ENCODE measurements at regions of chr9 and their contacts with region 1.

Region 1: DNA sequence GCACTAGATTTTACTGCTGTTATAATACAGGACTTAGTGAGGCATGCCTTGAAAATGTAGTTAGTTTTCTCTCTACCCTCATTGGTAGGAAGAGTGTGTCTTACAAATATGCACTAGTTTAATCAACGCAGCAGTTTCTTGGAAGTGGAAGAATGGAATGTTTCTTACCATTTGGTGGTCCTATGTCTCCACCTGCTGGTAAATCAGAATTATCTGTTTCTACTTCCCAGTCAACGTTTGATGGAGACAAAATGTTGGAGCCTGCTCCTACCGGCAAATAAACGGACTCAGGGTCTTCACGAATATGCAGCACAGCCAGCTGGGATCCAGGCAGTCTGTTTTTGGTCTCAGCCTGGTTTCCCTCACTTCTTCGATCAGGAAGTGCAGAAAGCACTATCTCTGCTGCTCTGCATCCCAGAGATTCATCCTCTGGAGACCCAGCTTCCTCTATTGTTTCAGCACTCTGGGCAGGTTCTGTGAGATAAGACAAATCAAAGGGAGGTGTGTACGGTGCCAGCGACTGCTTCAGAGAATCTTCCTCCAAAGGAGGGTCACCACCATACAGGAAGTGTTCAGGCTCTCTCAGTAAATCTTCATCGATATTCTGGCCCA is 59.5 kb upstream of the PCA3 start:
- DNase-seq: peak in 1 of 2 donors; percentile 48
- ATAC-seq: peak in 5 of 8 donors; percentile 44 to 78 (median 59)
- H3K4me3 ChIP-seq: no peak overlapping the region
- H3K27ac ChIP-seq: no peak overlapping the region
- H3K4me1 ChIP-seq: peaks cover 0 to 32% (median 0%) of the 10 kb centered on the region in 9 donors
- H3K27me3 ChIP-seq: peaks cover 0 to 56% (median 16%) of the 10 kb centered on the region in 7 donors
- CTCF ChIP-seq: peak; percentile 32 to 83 (median 72)

Region 2: DNA sequence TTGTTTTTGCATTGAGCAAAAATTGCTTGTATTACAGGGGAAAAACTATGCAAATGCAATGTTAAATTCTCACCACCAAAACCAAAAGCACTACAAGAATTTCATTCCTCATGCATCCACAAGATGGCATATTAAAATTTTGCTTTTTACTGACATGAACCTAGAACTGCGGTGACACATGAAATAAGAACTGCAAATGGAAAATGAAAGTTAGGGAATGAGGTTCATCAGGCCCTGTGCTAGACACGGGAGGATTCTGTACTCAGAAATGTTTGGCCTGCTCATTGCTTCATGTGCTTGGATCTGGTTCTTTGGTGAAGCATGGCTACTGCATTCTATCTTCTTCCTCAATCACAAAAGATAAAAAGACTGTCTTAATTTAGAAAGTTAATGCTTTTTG is 301.3 kb before region 1 on chr9:
- intact Hi-C with region 1: loop called in 4 of 10 experiments (anchors 1 to 10 kb)
- DNase-seq: peak in 1 of 2 donors; percentile 13
- ATAC-seq: peak in 7 of 8 donors; percentile 33 to 87 (median 70)
- H3K4me3 ChIP-seq: peak overlapping the region in 4 of 10 donors; percentile 2 to 30 (median 18)
- H3K27ac ChIP-seq: peak overlapping the region in 5 of 10 donors; percentile 6 to 63 (median 41)
- H3K4me1 ChIP-seq: peaks cover 0 to 11% (median 0%) of the 10 kb centered on the region in 9 donors
- H3K27me3 ChIP-seq: no peaks in the 10 kb centered on the region
- CTCF ChIP-seq: peak in 8 of 9 donors; percentile 24 to 69 (median 58)

Region 3: DNA sequence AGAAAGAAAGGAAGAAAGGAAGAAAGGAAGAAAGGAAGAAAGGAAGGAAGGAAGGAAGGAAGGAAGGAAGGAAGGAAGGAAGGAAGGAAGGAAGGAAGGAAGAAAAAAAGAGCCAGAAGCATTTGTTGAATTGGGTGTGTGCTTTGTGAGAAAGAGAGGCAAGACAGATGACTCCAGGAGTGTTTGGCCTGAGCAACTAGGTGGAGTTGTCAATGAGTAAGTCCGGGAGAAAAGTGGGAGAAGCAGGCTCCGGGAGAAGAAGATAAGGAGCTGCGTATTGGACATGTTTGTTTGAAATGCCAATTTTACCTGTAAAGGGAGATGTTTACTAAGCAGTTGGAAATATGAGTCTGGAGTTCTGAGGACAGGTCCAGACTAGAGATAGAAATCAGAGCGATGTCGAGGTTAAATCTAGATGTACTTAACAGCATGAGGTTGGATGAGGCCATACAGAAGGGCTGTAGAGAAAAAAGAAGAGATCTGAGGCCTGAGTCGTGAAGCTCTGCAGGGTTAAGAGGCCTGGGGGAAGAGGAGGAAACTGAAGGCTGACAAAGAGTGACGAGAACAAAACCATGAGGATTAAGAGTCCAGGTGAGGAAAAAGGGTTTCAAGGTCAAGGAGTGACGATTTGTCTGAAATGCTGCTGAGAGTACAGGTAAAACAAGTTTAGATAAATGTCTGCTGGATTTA is 260.7 kb before region 1 on chr9:
- intact Hi-C with region 1: loop called (anchors 1 to 5 kb)
- DNase-seq: no peak
- ATAC-seq: no peak
- H3K4me3 ChIP-seq: no peak overlapping the region
- H3K27ac ChIP-seq: no peak overlapping the region
- H3K4me1 ChIP-seq: peaks cover 0 to 7% (median 0%) of the 10 kb centered on the region in 9 donors
- H3K27me3 ChIP-seq: no peaks in the 10 kb centered on the region
- CTCF ChIP-seq: no peak

Region 4: DNA sequence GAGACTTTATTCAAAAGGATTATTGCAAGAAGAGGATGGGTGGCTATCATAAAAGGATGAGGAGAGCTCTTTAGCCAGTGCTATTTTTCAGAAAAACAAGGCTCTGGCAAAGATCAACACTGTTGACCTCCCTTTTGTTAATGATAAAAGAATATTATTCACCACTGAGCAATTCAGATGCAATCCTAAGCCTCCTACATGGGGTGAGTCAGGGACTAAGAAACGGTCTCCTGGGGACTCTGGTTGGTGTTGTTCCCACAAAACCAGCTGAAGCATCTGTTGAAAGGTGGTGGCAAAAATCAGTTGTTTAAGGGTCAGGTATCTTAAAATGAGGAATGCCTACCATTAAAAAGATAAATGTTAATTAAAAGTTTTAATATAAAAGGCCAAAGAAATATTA is 253.5 kb before region 1 on chr9:
- intact Hi-C with region 1: loop called in 9 of 10 experiments (anchors 1 to 5 kb)
- DNase-seq: no peak
- ATAC-seq: peak in 1 of 8 donors; percentile 68
- H3K4me3 ChIP-seq: no peak overlapping the region
- H3K27ac ChIP-seq: no peak overlapping the region
- H3K4me1 ChIP-seq: peaks cover 0 to 8% (median 0%) of the 10 kb centered on the region in 9 donors
- H3K27me3 ChIP-seq: no peaks in the 10 kb centered on the region
- CTCF ChIP-seq: no peak

Region 5: DNA sequence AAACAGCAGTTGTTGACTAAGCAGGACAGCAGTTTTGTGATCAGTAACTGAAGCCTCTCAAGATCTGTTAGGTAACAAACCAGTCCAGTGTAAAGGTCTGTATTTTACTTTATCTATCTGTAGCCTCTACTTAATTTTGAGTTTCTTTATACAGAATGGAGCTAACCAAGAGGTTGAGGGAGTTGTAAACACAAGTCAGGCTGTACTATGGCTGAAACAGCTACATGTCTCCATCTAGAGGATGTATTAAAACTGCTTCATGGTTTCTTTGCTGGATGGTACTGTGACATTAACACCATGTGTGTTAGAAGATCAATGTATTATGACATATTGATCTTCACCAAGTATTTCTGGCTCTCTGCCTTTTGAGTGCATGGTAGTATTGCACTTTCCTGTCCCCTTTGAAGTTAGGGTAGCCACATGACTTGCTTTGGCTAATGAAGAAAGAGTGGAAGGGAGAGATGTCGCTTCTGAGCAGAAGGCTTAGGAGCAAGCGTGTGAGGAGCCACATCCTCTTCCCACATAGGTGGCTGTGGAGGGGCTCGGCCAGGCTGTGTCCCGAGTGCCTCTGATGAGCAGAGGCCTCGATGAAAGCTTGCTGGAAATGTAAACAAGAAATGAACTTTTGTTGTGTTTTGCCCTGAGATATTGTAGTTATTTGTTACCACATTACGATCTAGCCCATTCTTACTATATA is 46.0 kb before region 1 on chr9:
- intact Hi-C with region 1: loop called in 1 of 10 experiments (anchors 5 kb)
- DNase-seq: no peak
- ATAC-seq: peak in 7 of 8 donors; percentile 75 to 93 (median 84)
- H3K4me3 ChIP-seq: no peak overlapping the region
- H3K27ac ChIP-seq: no peak overlapping the region
- H3K4me1 ChIP-seq: peaks cover 0 to 56% (median 14%) of the 10 kb centered on the region in 9 donors
- H3K27me3 ChIP-seq: no peaks in the 10 kb centered on the region
- CTCF ChIP-seq: peak in 8 of 9 donors; percentile 44 to 76 (median 63)

Region 6: DNA sequence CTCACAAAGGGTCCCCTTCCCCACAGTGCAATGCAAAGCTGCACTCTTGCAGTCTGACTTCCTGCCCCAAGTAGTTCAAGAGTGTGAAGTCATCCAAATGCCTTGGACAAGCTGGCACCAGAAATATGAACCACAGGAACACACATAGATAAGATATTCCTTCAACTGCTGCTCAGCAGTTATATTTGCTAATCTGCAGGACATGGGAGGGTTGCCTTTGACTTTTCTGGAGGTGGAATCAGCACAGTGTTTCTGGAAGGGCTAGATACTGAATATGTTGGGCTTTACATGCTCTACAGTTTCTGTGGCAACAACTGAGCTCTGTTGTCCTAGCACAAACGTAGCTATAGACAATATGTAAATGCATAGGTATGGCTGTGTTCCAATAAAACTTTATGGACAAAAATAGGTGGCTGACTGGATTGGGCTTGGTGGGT is 37.2 kb before region 1 on chr9:
- intact Hi-C with region 1: loop called in 5 of 10 experiments (anchors 5 kb)
- DNase-seq: no peak
- ATAC-seq: no peak
- H3K4me3 ChIP-seq: no peak overlapping the region
- H3K27ac ChIP-seq: no peak overlapping the region
- H3K4me1 ChIP-seq: peaks cover 0 to 15% (median 0%) of the 10 kb centered on the region in 9 donors
- H3K27me3 ChIP-seq: no peaks in the 10 kb centered on the region
- CTCF ChIP-seq: no peak

Region 7: GRCh38 chr9:76744336-76744735 is 39.6 kb after region 1 on chr9:
- intact Hi-C with region 1: no loop called
- DNase-seq: no peak
- ATAC-seq: no peak
- H3K4me3 ChIP-seq: no peak overlapping the region
- H3K27ac ChIP-seq: no peak overlapping the region
- H3K4me1 ChIP-seq: no peaks in the 10 kb centered on the region
- H3K27me3 ChIP-seq: no peaks in the 10 kb centered on the region
- CTCF ChIP-seq: no peak

Measured in heart right ventricle (tissue), 16 donors.